IMR-90 (cell line): ENCODE measurements at regions of chr6 and their contacts with region 1.

Region 1: GRCh38 chr6:83514866-83515466 is 2.6 kb downstream of the PRSS35 start:
- DNase-seq: peak; percentile 80
- ATAC-seq: 0 out of 2 replicates have a peak, but pooled peaks have one; percentile 30
- H3K4me3 ChIP-seq: no peak overlapping the region
- H3K27ac ChIP-seq: no peak overlapping the region
- H3K4me1 ChIP-seq: no peaks in the 10 kb centered on the region; the same call in 1 of the 2 replicates
- H3K27me3 ChIP-seq: no peaks in the 10 kb centered on the region
- CTCF ChIP-seq: peak; percentile 96
- POLR2A ChIP-seq: no peak
- RAD21 ChIP-seq: peak; percentile 93

Region 2: DNA sequence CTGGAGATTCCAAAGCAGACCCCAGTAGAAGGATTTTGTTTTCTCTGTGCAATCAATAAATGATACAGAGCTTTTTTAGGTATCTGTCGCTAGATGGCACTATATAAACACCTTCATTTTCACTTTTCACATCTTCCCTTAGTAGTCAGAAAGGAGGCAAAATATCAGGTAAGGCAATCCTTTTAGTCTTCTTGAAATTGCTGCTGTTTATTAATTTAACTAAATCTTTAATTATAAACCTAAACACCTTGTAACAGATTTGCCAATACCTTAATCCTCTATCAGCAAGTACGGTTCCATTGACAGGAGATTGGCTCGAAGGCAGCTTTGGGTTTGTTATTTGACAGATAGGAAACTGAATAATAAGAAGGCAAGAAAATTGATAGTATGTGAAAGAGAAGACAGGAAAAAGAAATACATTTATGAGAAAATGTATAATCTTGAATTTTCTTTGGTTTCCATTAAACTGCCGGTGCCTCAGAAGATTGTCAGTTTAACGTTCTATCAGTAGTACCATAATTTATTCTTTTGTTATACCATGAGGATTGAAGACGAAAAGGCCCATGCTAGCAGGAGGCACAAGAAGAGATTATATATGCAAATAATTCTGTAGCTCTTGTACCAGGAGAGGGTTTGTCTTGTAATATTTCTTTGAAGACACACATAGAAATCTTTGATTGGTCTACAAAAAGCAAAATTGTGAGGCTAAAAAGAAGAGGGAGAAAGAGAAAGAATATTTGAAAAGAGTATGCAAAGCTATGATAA is 1243.9 kb before region 1 on chr6:
- CTCF ChIA-PET with region 1: no interaction called
- POLR2A ChIA-PET with region 1: no interaction called
- dilution Hi-C with region 1: no loop called
- in situ Hi-C with region 1: loop called (anchors 25 kb)
- intact Hi-C with region 1: no loop called
- DNase-seq: peak; percentile 52
- ATAC-seq: no peak
- H3K4me3 ChIP-seq: no peak overlapping the region
- H3K27ac ChIP-seq: no peak overlapping the region
- H3K4me1 ChIP-seq: no peaks in the 10 kb centered on the region
- H3K27me3 ChIP-seq: peaks cover 5% of the 10 kb centered on the region; the same call in 1 of the 2 replicates
- CTCF ChIP-seq: peak; percentile 75
- POLR2A ChIP-seq: no peak
- RAD21 ChIP-seq: peak; percentile 79

Region 3: GRCh38 chr6:83215131-83216047 is 299.6 kb before region 1 on chr6:
- CTCF ChIA-PET with region 1: interaction called, 14 read pairs
- POLR2A ChIA-PET with region 1: no interaction called
- dilution Hi-C with region 1: loop called (anchors 25 kb)
- in situ Hi-C with region 1: loop called (anchors 5 kb)
- intact Hi-C with region 1: no loop called
- DNase-seq: peak; percentile 80
- ATAC-seq: peak; percentile 91
- H3K4me3 ChIP-seq: no peak overlapping the region
- H3K27ac ChIP-seq: peak overlapping the region; percentile 62; the same call in 1 of the 2 replicates
- H3K4me1 ChIP-seq: peaks cover 4% of the 10 kb centered on the region
- H3K27me3 ChIP-seq: no peaks in the 10 kb centered on the region
- CTCF ChIP-seq: peak; percentile 92
- POLR2A ChIP-seq: no peak
- RAD21 ChIP-seq: peak; percentile 84

Region 4: GRCh38 chr6:83354747-83355146 is 160.2 kb before region 1 on chr6:
- CTCF ChIA-PET with region 1: no interaction called
- POLR2A ChIA-PET with region 1: no interaction called
- dilution Hi-C with region 1: no loop called
- in situ Hi-C with region 1: no loop called
- intact Hi-C with region 1: no loop called
- DNase-seq: peak; percentile 26
- ATAC-seq: no peak
- H3K4me3 ChIP-seq: no peak overlapping the region
- H3K27ac ChIP-seq: no peak overlapping the region
- H3K4me1 ChIP-seq: no peaks in the 10 kb centered on the region
- H3K27me3 ChIP-seq: no peaks in the 10 kb centered on the region
- CTCF ChIP-seq: no peak
- POLR2A ChIP-seq: no peak
- RAD21 ChIP-seq: no peak

Region 5: GRCh38 chr6:83417880-83418663 is 96.9 kb before region 1 on chr6:
- CTCF ChIA-PET with region 1: interaction called, 71 read pairs
- POLR2A ChIA-PET with region 1: no interaction called
- dilution Hi-C with region 1: no loop called
- in situ Hi-C with region 1: loop called (anchors 5 kb)
- intact Hi-C with region 1: loop called (anchors 1 kb)
- DNase-seq: peak; percentile 79
- ATAC-seq: peak; percentile 93
- H3K4me3 ChIP-seq: no peak overlapping the region
- H3K27ac ChIP-seq: no peak overlapping the region
- H3K4me1 ChIP-seq: 0 out of 2 replicates have a peak, but pooled peaks cover 2% of the 10 kb centered on the region
- H3K27me3 ChIP-seq: no peaks in the 10 kb centered on the region
- CTCF ChIP-seq: peak; percentile 76
- POLR2A ChIP-seq: no peak
- RAD21 ChIP-seq: peak; percentile 71

Region 6: GRCh38 chr6:83467620-83468036 is 47.3 kb before region 1 on chr6:
- CTCF ChIA-PET with region 1: no interaction called
- POLR2A ChIA-PET with region 1: no interaction called
- dilution Hi-C with region 1: no loop called
- in situ Hi-C with region 1: no loop called
- intact Hi-C with region 1: no loop called
- DNase-seq: no peak
- ATAC-seq: no peak
- H3K4me3 ChIP-seq: no peak overlapping the region
- H3K27ac ChIP-seq: no peak overlapping the region
- H3K4me1 ChIP-seq: no peaks in the 10 kb centered on the region
- H3K27me3 ChIP-seq: no peaks in the 10 kb centered on the region
- CTCF ChIP-seq: no peak
- POLR2A ChIP-seq: no peak
- RAD21 ChIP-seq: no peak